HEK293T (cell line): ENCODE measurements at regions of chr13 and their contacts with region 1.

Region 1: DNA sequence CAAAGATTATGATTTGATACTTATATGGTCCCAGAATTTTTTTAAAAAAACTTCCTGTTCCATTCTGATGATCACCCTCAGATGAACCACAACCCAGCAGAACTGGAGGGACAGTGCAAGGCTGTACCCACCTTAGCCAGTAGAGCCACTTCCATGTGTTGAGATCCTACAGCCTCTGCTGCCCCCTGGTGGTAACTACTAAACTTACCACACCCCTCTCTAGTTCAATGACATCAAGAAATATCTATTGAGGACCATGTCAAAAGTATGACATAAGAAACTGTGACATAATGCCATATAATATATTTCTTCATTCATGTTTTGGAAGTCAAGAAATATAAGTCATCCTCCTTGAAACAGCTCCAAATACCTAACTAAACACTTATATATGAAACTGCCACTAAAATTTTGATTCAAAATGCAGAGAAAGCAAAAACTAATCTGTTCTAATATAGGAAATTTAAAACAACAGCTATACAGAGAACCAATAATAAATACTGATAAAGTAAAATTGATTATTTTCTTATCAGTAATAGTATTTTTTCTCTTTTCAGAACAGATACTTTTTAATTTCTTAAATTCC is 412.6 kb downstream of the KCTD12 start:
- DNase-seq: peak; percentile 90

Region 2: DNA sequence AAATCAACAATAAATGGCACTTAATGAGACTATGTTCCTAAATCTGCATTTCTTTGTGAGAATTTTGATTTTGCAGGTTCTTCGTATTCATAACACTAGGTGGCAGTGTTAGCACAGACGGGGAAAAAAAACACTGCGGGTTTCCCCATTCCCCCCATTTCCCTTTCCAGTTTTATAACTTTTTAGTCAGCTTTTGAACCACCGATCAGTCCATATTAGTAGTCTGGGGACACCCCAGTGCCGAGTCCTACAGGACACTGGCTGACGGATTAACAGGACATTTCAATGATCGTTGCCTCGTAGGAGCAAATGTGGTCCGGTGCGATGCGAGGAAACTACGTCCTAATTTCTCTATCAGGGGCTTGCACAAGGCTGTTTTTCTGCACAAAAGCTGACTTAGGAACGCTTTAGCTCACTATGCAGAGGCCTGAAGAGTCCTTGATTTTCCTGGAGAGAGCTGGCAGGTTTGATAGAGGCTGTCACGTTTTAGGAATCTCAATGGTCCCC is 603.2 kb before region 1 on chr13:
- CTCF ChIA-PET with region 1: interaction called, 44 read pairs
- POLR2A ChIA-PET with region 1: no interaction called
- DNase-seq: peak; percentile 70

Region 3: DNA sequence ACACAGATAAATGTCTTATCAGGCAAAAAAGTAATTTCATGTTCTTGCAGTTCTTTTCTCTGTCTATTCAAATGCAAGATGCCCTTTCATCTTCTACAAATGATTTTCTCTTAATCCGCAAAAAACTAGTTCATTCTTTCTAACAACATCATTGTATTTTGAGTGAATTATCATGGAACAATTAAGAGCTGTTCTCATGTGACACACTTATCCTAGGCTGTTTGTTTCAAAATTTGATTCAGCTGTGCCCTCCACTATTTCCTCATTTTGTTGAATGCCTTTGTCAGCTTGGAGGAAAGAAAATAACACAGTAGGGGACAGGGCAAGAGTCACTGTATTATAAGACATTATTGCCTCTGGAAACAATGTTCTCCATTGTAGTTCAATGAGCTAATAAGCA is 15.6 kb after region 1 on chr13:
- CTCF ChIA-PET with region 1: no interaction called
- POLR2A ChIA-PET with region 1: no interaction called
- DNase-seq: no peak